ENCODE measurements at regions of chr20 and their contacts with region 1.

Region 1: GRCh38 chr20:21235484-21236445 is 67.4 kb upstream of the XRN2 start:
- DNase-seq: peak; percentile 83
- ATAC-seq: peak; percentile 85
- H3K4me3 Mint-ChIP-seq: no peak overlapping the region
- H3K27ac Mint-ChIP-seq: no peak overlapping the region
- H3K4me1 Mint-ChIP-seq: peaks cover 3% of the 10 kb centered on the region
- H3K27me3 Mint-ChIP-seq: no peaks in the 10 kb centered on the region

Region 2: DNA sequence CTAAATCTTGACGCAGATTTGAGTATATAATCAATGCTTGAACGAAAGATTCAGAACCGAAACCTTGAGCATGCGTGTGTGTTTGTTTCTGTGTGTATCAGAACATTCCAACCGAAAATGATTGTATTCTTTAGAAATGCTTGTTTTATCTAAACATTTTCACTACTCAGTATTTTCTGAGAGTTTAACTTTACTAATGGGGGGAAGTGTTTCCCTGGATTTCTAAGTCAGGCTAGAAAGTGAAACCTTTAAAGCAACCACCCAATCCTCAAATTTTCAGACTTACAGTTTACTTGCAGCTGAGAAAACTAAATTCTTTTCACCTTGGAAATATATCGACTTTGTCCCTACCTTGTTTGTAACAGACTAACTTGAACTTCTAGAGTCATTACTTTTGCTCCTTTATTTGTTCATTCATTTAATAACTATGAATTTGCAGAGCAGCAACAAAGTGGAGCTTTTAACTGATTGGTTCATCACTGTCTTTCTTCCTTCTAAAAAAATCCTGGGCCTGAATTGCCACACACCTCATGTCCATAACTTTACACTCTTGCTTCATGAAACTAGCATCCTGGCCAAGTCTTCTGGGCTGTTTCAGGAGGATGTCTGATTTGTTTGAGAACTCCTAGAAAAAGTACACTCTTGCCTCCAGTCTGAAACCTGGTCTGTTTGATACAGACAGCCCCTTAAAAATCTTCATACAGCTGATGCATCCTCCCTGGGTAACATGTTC is 10.4 kb before region 1 on chr20:
- CTCF ChIA-PET with region 1: interaction called, 31 read pairs
- POLR2A ChIA-PET with region 1: no interaction called
- intact Hi-C with region 1: no loop called
- DNase-seq: no peak
- ATAC-seq: no peak
- H3K4me3 Mint-ChIP-seq: no peak overlapping the region
- H3K27ac Mint-ChIP-seq: no peak overlapping the region
- H3K4me1 Mint-ChIP-seq: no peaks in the 10 kb centered on the region
- H3K27me3 Mint-ChIP-seq: no peaks in the 10 kb centered on the region

Region 3: DNA sequence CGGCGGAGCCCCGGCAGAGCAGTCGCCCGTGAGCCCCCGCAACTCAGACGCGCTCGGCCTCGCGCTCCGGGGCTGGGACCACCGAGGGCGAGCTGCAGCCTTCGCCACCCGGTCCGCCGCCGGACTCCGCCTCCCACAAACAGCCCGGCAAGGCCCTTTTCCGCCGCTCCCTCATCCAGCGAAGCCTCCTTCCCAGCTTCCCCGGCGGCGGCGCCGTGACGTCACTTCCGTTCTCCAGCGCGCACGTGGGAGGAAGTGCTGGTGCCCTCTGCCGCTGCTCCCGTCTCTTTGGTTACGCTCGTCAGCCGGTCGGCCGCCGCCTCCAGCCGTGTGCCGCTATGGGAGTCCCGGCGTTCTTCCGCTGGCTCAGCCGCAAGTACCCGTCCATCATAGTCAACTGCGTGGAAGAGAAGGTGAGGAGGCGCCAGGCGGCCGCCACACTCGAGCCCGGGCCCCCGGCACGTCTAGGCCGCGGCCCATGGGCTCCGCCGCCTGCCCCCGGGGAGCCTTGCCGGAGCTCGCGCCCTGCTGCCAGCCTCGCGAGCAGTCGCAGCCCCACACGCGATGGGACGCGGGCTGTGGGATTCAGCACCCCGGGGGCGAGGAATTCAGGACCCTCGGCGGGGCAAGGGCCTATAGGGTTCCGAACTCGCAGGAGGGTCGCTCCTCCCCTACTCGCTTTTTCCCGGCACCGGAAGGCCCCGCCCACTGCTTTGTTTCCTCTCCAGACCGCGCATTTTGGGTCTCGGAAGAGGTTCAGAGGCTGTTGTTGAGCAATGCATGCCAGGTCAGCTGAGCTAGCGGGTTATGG is 67.5 kb after region 1 on chr20 and contains the start of gene XRN2:
- CTCF ChIA-PET with region 1: interaction called, 14 read pairs
- POLR2A ChIA-PET with region 1: no interaction called
- intact Hi-C with region 1: loop called (anchors 1 kb)
- DNase-seq: peak; percentile 98
- ATAC-seq: peak; percentile 85
- H3K4me3 Mint-ChIP-seq: peak within 1 kb of the TSS; percentile 93
- H3K27ac Mint-ChIP-seq: peak within 1 kb of the TSS; percentile 98
- H3K4me1 Mint-ChIP-seq: peaks cover 31% of the 10 kb centered on the region
- H3K27me3 Mint-ChIP-seq: no peaks in the 10 kb centered on the region
- total RNA-seq, gene XRN2: 87.1 to 88.4 TPM

Region 4: GRCh38 chr20:21389368-21389767 is 153.6 kb after region 1 on chr20:
- CTCF ChIA-PET with region 1: interaction called, 12 read pairs
- POLR2A ChIA-PET with region 1: no interaction called
- intact Hi-C with region 1: loop called in 1 of 2 experiments (anchors 2 kb)
- DNase-seq: no peak
- ATAC-seq: no peak
- H3K4me3 Mint-ChIP-seq: no peak overlapping the region
- H3K27ac Mint-ChIP-seq: no peak overlapping the region
- H3K4me1 Mint-ChIP-seq: peaks cover 18% of the 10 kb centered on the region
- H3K27me3 Mint-ChIP-seq: peaks cover 27% of the 10 kb centered on the region

Region 5: DNA sequence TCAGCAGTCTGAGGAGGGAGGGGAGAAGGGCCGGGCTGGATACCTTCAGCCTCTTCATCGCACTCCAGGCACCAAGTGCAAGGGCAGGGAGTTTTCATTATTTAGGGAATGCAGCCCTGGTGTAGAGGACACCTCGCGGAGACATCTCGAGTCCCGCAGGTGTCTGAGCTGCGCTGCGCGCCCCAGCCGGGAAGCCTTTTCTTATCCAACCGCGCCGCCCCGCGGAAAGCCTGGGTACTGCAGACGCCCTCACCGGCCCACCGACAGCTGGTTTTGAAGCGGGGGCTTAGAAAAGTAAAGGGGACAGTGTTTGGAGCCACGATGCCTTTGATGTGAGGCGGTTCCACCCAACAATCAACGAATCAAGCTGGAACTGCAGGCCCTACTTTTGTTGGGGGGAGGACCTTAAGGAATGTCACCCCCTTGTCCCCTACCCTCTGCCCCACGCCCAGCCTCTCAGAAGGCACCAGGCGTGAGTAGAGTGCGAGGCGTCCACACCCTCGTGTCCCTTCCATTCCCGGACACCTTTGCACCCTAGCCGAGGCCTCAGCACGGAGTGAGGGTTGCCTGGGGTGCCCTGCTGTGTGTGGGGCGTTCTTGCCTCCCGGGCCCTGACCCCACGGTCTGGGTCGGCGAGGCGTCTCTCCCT is 269.5 kb after region 1 on chr20:
- CTCF ChIA-PET with region 1: interaction called, 179 read pairs
- POLR2A ChIA-PET with region 1: interaction called, 4 read pairs
- intact Hi-C with region 1: loop called (anchors 1 kb)
- DNase-seq: peak; percentile 90
- ATAC-seq: peak; percentile 70
- H3K4me3 Mint-ChIP-seq: peak overlapping the region; percentile 52
- H3K27ac Mint-ChIP-seq: peak overlapping the region; percentile 8
- H3K4me1 Mint-ChIP-seq: peaks cover 25% of the 10 kb centered on the region
- H3K27me3 Mint-ChIP-seq: peaks cover 52% of the 10 kb centered on the region

Region 6: DNA sequence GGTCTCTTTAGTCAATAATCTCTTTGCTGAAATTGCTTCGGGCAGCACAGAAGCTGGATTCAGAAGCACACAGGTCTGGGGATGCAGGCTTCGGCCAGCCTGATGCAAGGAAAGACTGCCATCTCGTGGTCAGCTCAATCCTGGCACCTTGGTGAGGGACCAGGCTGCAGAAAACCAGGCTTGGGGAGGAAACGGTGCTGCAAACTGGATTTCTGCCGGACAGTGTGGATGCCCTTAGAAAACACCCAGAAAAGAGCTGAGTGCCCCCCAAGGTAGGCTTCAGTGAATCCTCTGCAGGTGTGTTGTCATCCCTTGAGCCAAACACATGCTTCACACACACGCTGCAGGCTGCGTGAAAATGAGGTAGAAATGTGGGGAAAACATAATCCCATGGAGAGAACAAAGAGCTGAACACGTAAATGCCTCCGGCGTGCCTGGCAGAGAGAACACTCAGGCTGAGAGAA is 379.9 kb after region 1 on chr20:
- CTCF ChIA-PET with region 1: interaction called, 12 read pairs
- POLR2A ChIA-PET with region 1: no interaction called
- intact Hi-C with region 1: loop called in 1 of 2 experiments (anchors 1 kb)
- DNase-seq: peak; percentile 73
- ATAC-seq: peak; percentile 53
- H3K4me3 Mint-ChIP-seq: no peak overlapping the region
- H3K27ac Mint-ChIP-seq: no peak overlapping the region
- H3K4me1 Mint-ChIP-seq: no peaks in the 10 kb centered on the region
- H3K27me3 Mint-ChIP-seq: peaks cover 32% of the 10 kb centered on the region

Measured in activated CD4-positive, alpha-beta T cell treated with anti-CD3 and anti-CD28 coated beads for 36 hours (primary cell).